ENCODE measurements at regions of chr1 and their contacts with region 1.

Region 1: DNA sequence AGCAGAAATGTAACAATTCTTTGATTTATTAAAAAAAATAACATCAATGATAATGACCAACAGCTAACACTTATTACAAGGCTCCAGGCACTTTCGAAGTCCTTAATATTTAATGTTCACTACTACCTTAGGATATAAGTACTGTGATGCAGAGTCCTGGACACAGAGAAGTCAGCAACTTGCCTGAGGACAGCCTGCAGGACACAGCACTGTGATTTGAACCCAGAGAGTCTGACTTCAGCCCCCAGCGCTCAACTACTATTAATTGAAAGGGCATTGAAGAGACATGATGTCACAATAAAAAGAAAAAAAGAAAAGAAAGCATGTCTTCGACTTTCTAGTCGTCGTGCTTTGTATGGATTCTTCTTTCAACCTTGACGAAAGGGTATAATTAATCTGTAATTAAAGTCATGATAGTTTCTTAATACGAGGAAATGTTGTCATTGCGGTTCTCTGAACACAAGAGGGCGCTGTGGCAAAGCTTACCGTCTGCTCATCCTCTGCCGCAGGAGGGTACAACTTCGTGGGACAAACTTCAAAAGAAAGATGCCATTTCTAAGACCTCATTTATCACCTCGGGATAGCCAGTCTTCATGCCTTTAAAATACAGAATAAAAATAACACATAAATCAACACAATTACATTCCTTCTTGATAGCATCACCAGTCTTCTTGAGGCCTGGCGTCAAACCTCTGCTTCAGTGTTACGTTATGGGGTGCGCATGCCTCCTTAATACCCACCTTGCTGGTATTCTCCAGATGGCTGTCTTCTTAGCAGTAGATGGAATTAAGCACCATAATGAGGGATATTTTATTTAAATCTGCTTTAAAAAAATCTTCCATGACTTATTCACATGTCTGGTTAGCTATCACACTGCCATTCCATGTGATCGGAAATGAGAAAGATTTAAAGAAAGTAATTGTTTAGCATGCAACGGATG is 240.1 kb downstream of the DISC1 start:
- DNase-seq: peak; percentile 89
- H3K4me3 Mint-ChIP-seq: no peak overlapping the region
- H3K27ac Mint-ChIP-seq: peak overlapping the region; percentile 60
- H3K4me1 Mint-ChIP-seq: peaks cover 20% of the 10 kb centered on the region
- H3K27me3 Mint-ChIP-seq: no peaks in the 10 kb centered on the region
- CTCF ChIP-seq: peak; percentile 100

Region 2: GRCh38 chr1:231642618-231643017 is 224.0 kb before region 1 on chr1:
- CTCF ChIA-PET with region 1: no interaction called
- POLR2A ChIA-PET with region 1: no interaction called
- intact Hi-C with region 1: no loop called
- DNase-seq: no peak
- H3K4me3 Mint-ChIP-seq: no peak overlapping the region
- H3K27ac Mint-ChIP-seq: no peak overlapping the region
- H3K4me1 Mint-ChIP-seq: peaks cover 5% of the 10 kb centered on the region
- H3K27me3 Mint-ChIP-seq: no peaks in the 10 kb centered on the region
- CTCF ChIP-seq: no peak

Region 3: DNA sequence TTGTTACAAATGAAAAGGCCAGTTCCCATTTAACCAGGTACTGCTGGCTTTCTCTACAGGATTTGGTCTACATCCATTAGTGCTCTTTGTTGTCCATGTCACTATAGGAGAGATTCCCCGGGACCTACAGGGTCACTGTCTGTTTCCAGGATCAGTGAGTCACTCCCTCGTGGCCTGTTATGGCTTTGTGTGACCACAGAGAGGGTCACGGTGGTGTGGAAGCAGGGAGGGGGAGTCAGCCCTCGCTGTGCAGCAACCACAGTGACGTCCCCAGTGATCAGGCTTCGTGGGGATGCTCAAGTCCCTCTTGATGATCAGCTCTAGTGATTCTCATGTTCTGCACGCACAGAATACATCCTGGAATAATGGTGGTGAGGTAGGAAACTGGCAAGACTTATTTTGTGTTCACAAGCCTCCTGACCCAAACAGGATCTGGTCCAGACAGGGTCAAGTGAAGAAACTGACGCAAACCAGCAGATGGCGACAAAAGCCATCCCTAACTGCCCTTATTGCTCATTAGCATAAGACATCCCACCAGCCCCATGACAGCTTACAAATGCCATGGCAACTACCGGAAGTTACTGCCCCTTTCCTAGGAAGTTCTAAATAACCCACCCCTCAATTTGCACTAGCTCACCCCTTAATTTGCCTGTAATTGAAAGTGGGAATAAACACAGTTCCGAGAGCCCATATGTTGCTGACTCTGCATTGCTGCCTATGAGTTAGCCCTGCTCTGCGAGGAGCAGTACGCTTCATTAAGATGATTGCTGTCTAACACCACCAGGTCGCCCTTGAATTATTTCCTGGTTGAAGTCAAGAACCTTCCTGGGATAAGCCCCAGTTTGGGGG is 141.6 kb before region 1 on chr1:
- CTCF ChIA-PET with region 1: interaction called, 13 read pairs
- POLR2A ChIA-PET with region 1: no interaction called
- intact Hi-C with region 1: loop called (anchors 2 kb)
- DNase-seq: peak; percentile 90
- H3K4me3 Mint-ChIP-seq: no peak overlapping the region
- H3K27ac Mint-ChIP-seq: no peak overlapping the region
- H3K4me1 Mint-ChIP-seq: no peaks in the 10 kb centered on the region
- H3K27me3 Mint-ChIP-seq: no peaks in the 10 kb centered on the region
- CTCF ChIP-seq: peak; percentile 79

Region 4: DNA sequence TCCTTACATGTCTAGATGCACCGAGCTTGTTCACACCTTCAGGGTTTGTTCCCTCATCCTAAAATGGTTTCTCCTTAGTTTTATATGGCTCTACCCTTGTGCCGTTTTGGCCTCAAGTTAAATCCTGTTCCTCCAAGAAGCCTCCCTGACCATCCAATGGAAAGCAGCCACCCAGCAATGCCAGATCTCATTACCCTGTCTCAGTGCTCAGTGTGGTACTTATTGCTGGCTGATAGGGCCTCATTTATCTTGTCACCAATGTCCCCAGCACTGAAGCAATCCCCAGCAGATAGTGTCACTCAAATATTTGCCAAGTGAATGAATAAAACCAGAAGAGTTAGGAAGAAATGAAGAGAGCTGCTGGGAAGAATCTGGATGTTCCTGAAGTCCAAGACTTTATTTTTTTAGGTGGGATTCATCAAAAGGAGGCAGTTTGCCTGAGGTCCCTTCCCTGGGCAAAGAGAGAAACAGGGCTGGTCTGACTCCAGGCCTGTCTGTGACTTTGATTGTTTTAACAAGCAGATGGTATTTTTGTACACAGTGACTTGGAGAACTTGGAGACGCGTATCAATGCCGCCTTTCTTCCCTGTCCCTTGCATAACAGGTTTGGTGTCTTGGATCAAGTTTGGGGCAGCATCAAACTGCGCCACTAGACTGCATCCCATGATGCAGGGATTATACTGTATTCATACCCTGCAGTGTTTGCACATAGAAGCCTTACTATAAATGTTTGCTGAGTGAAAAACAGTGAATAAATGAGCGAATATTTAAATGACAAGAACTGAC is 18.9 kb before region 1 on chr1:
- CTCF ChIA-PET with region 1: interaction called, 19 read pairs
- POLR2A ChIA-PET with region 1: interaction called, 7 read pairs
- intact Hi-C with region 1: no loop called
- DNase-seq: no peak
- H3K4me3 Mint-ChIP-seq: no peak overlapping the region
- H3K27ac Mint-ChIP-seq: peak overlapping the region; percentile 12
- H3K4me1 Mint-ChIP-seq: peaks cover 5% of the 10 kb centered on the region
- H3K27me3 Mint-ChIP-seq: no peaks in the 10 kb centered on the region
- CTCF ChIP-seq: no peak

Region 5: GRCh38 chr1:231918239-231919015 is 51.8 kb after region 1 on chr1:
- CTCF ChIA-PET with region 1: interaction called, 12 read pairs
- POLR2A ChIA-PET with region 1: no interaction called
- intact Hi-C with region 1: no loop called
- DNase-seq: peak; percentile 53
- H3K4me3 Mint-ChIP-seq: no peak overlapping the region
- H3K27ac Mint-ChIP-seq: peak overlapping the region; percentile 22
- H3K4me1 Mint-ChIP-seq: peaks cover 24% of the 10 kb centered on the region
- H3K27me3 Mint-ChIP-seq: no peaks in the 10 kb centered on the region
- CTCF ChIP-seq: no peak

Region 6: GRCh38 chr1:231958448-231958847 is 91.8 kb after region 1 on chr1:
- CTCF ChIA-PET with region 1: no interaction called
- POLR2A ChIA-PET with region 1: no interaction called
- intact Hi-C with region 1: no loop called
- DNase-seq: no peak
- H3K4me3 Mint-ChIP-seq: no peak overlapping the region
- H3K27ac Mint-ChIP-seq: no peak overlapping the region
- H3K4me1 Mint-ChIP-seq: no peaks in the 10 kb centered on the region
- H3K27me3 Mint-ChIP-seq: peaks cover 9% of the 10 kb centered on the region
- CTCF ChIP-seq: no peak

Region 7: GRCh38 chr1:232226197-232226712 is 359.6 kb after region 1 on chr1:
- CTCF ChIA-PET with region 1: interaction called, 9 read pairs
- POLR2A ChIA-PET with region 1: interaction called, 12 read pairs
- intact Hi-C with region 1: loop called (anchors 5 kb)
- DNase-seq: peak; percentile 96
- H3K4me3 Mint-ChIP-seq: peak overlapping the region; percentile 5
- H3K27ac Mint-ChIP-seq: peak overlapping the region; percentile 10
- H3K4me1 Mint-ChIP-seq: peaks cover 52% of the 10 kb centered on the region
- H3K27me3 Mint-ChIP-seq: no peaks in the 10 kb centered on the region
- CTCF ChIP-seq: no peak

Region 8: GRCh38 chr1:232422901-232423300 is 556.2 kb after region 1 on chr1:
- CTCF ChIA-PET with region 1: interaction called, 9 read pairs
- POLR2A ChIA-PET with region 1: interaction called, 4 read pairs
- intact Hi-C with region 1: loop called (anchors 2 kb)
- DNase-seq: peak; percentile 94
- H3K4me3 Mint-ChIP-seq: no peak overlapping the region
- H3K27ac Mint-ChIP-seq: peak overlapping the region; percentile 81
- H3K4me1 Mint-ChIP-seq: peaks cover 27% of the 10 kb centered on the region
- H3K27me3 Mint-ChIP-seq: no peaks in the 10 kb centered on the region
- CTCF ChIP-seq: no peak

Measured in MCF 10A (cell line).